G401 (cell line): ENCODE measurements at regions of chr2 and their contacts with region 1.

Region 1: GRCh38 chr2:9712263-9712662 is 81.5 kb upstream of the YWHAQ start:
- DNase-seq: no peak

Region 2: GRCh38 chr2:9763356-9764152 is 51.3 kb after region 1 on chr2:
- in situ Hi-C with region 1: loop called (anchors 5 kb)
- DNase-seq: peak; percentile 93